GM12878 (cell line): ENCODE measurements at regions of chr14 and their contacts with region 1.

Region 1: DNA sequence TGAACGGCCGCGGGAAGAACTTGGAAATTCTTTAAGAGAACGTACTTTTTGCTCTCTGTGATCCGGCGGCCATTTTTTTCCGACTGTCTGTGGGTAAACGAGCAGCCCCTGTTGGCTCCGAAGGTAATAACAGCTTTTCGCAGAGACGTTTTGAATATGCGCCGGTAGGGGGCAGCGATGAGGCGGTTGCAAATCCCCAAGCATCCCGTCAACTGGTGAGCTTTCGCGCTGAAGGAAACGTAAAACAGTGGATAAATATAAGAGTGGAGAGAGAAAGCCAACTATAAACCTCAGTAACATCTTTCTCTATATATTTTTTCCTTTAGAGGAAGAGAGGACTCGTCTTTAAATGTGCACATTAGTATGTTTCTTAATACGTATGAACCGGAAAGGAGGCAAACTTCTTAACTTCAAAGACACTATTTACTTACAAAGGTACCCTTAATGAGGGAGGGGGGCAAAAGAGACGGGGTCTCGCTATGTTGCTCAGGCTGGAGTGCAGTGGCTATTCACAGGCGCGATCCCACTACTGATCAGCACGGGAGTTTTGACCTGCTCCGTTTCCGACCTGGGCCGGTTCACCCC is 9.6 kb upstream of the NEMF start:
- DNase-seq: no peak
- ATAC-seq: peak; percentile 5
- H3K4me3 ChIP-seq: peak overlapping the region; percentile 79
- H3K27ac ChIP-seq: peak overlapping the region; percentile 99
- H3K4me1 ChIP-seq: peaks cover 8% of the 10 kb centered on the region
- H3K27me3 ChIP-seq: no peaks in the 10 kb centered on the region
- CTCF ChIP-seq: peak; percentile 100
- EP300 ChIP-seq: peak in 1 of 2 experiments; percentile 26; a peak in 1 of 4 replicates
- POLR2A ChIP-seq: no peak
- RAD21 ChIP-seq: peak; percentile 64

Region 2: GRCh38 chr14:49633640-49634546 is 228.3 kb before region 1 on chr14:
- CTCF ChIA-PET with region 1: interaction called, 8 read pairs
- POLR2A ChIA-PET with region 1: interaction called, 12 read pairs
- RAD21 ChIA-PET with region 1: interaction called, 22 read pairs
- SMC1A ChIA-PET with region 1: interaction called, 4 read pairs
- in situ Hi-C with region 1: no loop called
- intact Hi-C with region 1: no loop called
- DNase-seq: peak; percentile 78
- ATAC-seq: peak; percentile 82
- H3K4me3 ChIP-seq: peak overlapping the region; percentile 99
- H3K27ac ChIP-seq: peak overlapping the region; percentile 85
- H3K4me1 ChIP-seq: peaks cover 6% of the 10 kb centered on the region; the same call in 1 of the 2 replicates
- H3K27me3 ChIP-seq: no peaks in the 10 kb centered on the region
- CTCF ChIP-seq: peak; percentile 80 to 99 (median 87); a peak in 5 of 6 replicates
- EP300 ChIP-seq: peak in 1 of 2 experiments; percentile 35; a peak in 1 of 4 replicates
- POLR2A ChIP-seq: peak; percentile 83
- RAD21 ChIP-seq: peak; percentile 88

Region 3: GRCh38 chr14:49786315-49787110 is 75.7 kb before region 1 on chr14:
- CTCF ChIA-PET with region 1: no interaction called
- POLR2A ChIA-PET with region 1: no interaction called
- RAD21 ChIA-PET with region 1: no interaction called
- SMC1A ChIA-PET with region 1: no interaction called
- in situ Hi-C with region 1: no loop called
- intact Hi-C with region 1: no loop called
- DNase-seq: no peak
- ATAC-seq: no peak
- H3K4me3 ChIP-seq: no peak overlapping the region
- H3K27ac ChIP-seq: no peak overlapping the region
- H3K4me1 ChIP-seq: no peaks in the 10 kb centered on the region
- H3K27me3 ChIP-seq: no peaks in the 10 kb centered on the region
- CTCF ChIP-seq: no peak
- EP300 ChIP-seq: no peak
- POLR2A ChIP-seq: no peak
- RAD21 ChIP-seq: no peak

Region 4: GRCh38 chr14:49892636-49893308 is 30.6 kb after region 1 on chr14 and contains the start of gene ARF6:
- CTCF ChIA-PET with region 1: interaction called, 19 read pairs
- POLR2A ChIA-PET with region 1: interaction called, 36 read pairs
- RAD21 ChIA-PET with region 1: interaction called, 21 read pairs
- SMC1A ChIA-PET with region 1: interaction called, 11 read pairs
- in situ Hi-C with region 1: no loop called
- intact Hi-C with region 1: no loop called
- DNase-seq: peak; percentile 81
- ATAC-seq: peak; percentile 83
- H3K4me3 ChIP-seq: peak within 1 kb of the TSS; percentile 97
- H3K27ac ChIP-seq: peak within 1 kb of the TSS; percentile 100
- H3K4me1 ChIP-seq: peaks cover 5% of the 10 kb centered on the region
- H3K27me3 ChIP-seq: no peaks in the 10 kb centered on the region
- CTCF ChIP-seq: peak in 2 of 3 experiments; percentile 15 to 29; a peak in 1 of 6 replicates
- EP300 ChIP-seq: no peak
- POLR2A ChIP-seq: peak; percentile 92
- RAD21 ChIP-seq: 0 out of 2 replicates have a peak, but pooled peaks have one; percentile 10
- polyA plus RNA-seq, gene ARF6: 46.8 to 86.6 TPM

Region 5: DNA sequence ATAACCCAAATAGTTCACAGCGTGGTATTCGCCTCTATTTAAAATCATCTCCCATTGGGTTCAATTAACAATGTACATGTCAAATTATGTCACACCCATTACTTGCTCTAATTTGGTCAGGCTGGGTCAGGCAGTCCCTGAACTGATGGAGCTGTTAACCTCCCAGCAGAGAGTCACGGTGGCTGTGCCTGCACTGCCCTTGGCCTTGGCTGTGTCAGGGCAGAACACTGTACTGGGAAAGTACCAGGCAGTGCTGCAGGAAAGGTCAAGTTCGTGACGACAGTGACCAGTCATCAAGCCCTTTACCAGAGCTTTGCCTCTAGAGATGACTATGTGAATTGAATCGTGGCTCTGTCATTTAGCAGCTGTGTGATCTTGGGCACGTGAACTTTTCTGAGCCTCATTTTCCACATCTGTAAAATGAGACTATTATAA is 130.7 kb after region 1 on chr14:
- CTCF ChIA-PET with region 1: interaction called, 82 read pairs
- POLR2A ChIA-PET with region 1: interaction called, 10 read pairs
- RAD21 ChIA-PET with region 1: interaction called, 7 read pairs
- SMC1A ChIA-PET with region 1: interaction called, 14 read pairs
- in situ Hi-C with region 1: no loop called
- intact Hi-C with region 1: no loop called
- DNase-seq: peak; percentile 87
- ATAC-seq: peak; percentile 95
- H3K4me3 ChIP-seq: no peak overlapping the region
- H3K27ac ChIP-seq: peak overlapping the region; percentile 29; the same call in 1 of the 2 replicates
- H3K4me1 ChIP-seq: peaks cover 12% of the 10 kb centered on the region
- H3K27me3 ChIP-seq: no peaks in the 10 kb centered on the region
- CTCF ChIP-seq: no peak
- EP300 ChIP-seq: peak; percentile 91; a peak in 3 of 4 replicates
- POLR2A ChIP-seq: peak; percentile 75
- RAD21 ChIP-seq: no peak

Region 6: DNA sequence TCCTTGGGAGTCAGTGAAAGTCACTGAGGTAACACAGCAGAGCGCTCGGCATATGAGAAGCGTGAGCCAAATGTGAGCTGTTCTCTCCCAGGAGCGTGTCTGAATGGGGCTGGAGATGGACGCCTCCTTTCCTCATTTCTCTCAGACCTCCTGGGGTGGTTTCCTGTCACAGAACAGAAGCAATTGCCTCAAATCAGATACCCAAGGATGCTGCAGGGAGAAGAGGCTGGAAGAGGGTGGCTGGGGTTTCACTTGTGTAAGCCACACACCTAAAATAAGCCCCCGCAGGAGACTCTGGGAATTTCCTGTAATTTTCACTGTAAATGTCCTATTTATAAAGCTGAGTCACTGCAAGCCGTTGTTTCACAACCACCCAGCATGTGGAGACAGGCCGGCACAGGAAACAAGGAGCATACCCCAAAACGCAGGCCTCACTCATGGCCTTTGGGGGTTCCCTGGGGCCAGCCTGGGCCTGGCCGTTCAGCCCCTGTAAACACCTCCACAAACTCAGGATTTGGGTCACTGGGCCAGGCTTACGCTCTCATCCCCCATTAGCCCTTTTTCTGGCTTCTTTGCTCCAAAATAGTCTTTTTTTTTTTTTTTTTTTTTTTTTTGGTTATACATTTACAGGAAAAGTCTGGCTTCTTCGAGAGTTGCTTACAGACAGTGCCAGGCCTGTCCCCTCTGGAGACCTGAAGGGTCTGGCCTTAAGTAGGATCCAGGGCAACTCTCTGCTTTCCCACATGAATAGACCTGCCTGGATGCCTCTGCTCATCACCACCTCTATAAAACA is 198.9 kb after region 1 on chr14:
- CTCF ChIA-PET with region 1: interaction called, 92 read pairs
- POLR2A ChIA-PET with region 1: interaction called, 19 read pairs
- RAD21 ChIA-PET with region 1: interaction called, 50 read pairs
- SMC1A ChIA-PET with region 1: interaction called, 27 read pairs
- in situ Hi-C with region 1: no loop called
- intact Hi-C with region 1: loop called (anchors 5 kb)
- DNase-seq: no peak
- ATAC-seq: peak; percentile 51
- H3K4me3 ChIP-seq: 0 out of 2 replicates have a peak overlapping the region, but pooled peaks have one; percentile 25
- H3K27ac ChIP-seq: peak overlapping the region; percentile 98
- H3K4me1 ChIP-seq: peaks cover 53% of the 10 kb centered on the region
- H3K27me3 ChIP-seq: no peaks in the 10 kb centered on the region
- CTCF ChIP-seq: no peak
- EP300 ChIP-seq: peak in 1 of 2 experiments; percentile 66; a peak in 2 of 4 replicates
- POLR2A ChIP-seq: no peak
- RAD21 ChIP-seq: peak; percentile 32; the same call in 1 of the 2 replicates

Region 7: DNA sequence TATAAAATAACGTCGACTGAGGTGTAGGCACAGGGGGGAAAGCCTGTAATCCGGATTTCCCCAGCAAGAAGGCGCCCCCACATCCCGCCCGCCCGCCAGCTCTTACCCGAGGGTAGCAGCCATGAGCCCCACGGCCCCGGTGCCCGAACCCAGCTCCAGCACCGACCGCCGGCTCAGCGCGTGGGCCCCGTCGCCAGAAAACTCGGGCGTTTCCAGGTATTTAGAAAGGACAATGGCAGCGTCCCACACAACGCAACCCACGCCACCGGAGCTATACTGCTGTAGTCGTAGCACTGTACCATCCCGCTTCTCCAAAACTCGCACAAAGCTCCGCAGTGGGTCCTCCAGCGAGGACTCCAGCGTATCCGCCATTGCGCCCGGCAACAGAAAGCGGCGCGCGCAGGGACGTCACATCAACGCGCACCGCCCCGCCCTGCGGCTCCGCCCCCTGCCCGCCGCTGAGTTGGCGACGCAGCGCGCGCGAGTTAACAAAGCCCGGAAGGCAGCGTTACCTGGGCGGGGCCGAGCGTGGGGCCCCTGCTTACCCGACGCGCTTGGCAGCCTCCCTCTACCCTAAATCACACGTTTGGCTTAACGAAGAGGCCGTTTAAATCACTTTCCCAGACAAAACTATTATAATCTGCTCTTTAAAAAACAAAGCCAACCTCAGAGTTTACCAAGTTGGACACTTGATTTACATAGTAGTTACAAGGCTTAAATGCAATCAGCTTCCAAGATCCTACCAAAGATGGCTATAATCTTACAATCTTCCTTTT is 254.2 kb after region 1 on chr14 and contains the start of gene VCPKMT:
- CTCF ChIA-PET with region 1: interaction called, 22 read pairs
- POLR2A ChIA-PET with region 1: interaction called, 34 read pairs
- RAD21 ChIA-PET with region 1: interaction called, 11 read pairs
- SMC1A ChIA-PET with region 1: interaction called, 6 read pairs
- in situ Hi-C with region 1: no loop called
- intact Hi-C with region 1: no loop called
- DNase-seq: peak; percentile 62
- ATAC-seq: peak; percentile 97
- H3K4me3 ChIP-seq: peak within 1 kb of the TSS; percentile 76
- H3K27ac ChIP-seq: peak within 1 kb of the TSS; percentile 84
- H3K4me1 ChIP-seq: peaks cover 8% of the 10 kb centered on the region
- H3K27me3 ChIP-seq: no peaks in the 10 kb centered on the region
- CTCF ChIP-seq: no peak
- EP300 ChIP-seq: 0 out of 4 replicates have a peak, but pooled peaks of 1 of the 2 experiments have one; percentile 13
- POLR2A ChIP-seq: peak; percentile 93
- RAD21 ChIP-seq: no peak
- polyA plus RNA-seq, gene VCPKMT: 8.5 to 11.5 TPM